MCF 10A (cell line): ENCODE measurements at regions of chr3 and their contacts with region 1.

Region 1: GRCh38 chr3:100556656-100557310 is 52.6 kb upstream of the ADGRG7 start:
- DNase-seq: peak; percentile 85
- H3K4me3 Mint-ChIP-seq: no peak overlapping the region
- H3K27ac Mint-ChIP-seq: peak overlapping the region; percentile 46
- H3K4me1 Mint-ChIP-seq: peaks cover 33% of the 10 kb centered on the region
- H3K27me3 Mint-ChIP-seq: no peaks in the 10 kb centered on the region
- CTCF ChIP-seq: no peak

Region 2: GRCh38 chr3:100492059-100493006 is 64.5 kb before region 1 on chr3 and contains the start of gene TMEM45A:
- CTCF ChIA-PET with region 1: interaction called, 3 read pairs
- POLR2A ChIA-PET with region 1: no interaction called
- intact Hi-C with region 1: loop called (anchors 2 kb)
- DNase-seq: peak; percentile 92
- H3K4me3 Mint-ChIP-seq: peak within 1 kb of the TSS; percentile 82
- H3K27ac Mint-ChIP-seq: peak within 1 kb of the TSS; percentile 82
- H3K4me1 Mint-ChIP-seq: peaks cover 12% of the 10 kb centered on the region
- H3K27me3 Mint-ChIP-seq: no peaks in the 10 kb centered on the region
- CTCF ChIP-seq: no peak
- total RNA-seq, gene TMEM45A: 4.1 and 8.0 TPM in 2 replicates